ENCODE measurements at regions of chr11 and their contacts with region 1.

Region 1: DNA sequence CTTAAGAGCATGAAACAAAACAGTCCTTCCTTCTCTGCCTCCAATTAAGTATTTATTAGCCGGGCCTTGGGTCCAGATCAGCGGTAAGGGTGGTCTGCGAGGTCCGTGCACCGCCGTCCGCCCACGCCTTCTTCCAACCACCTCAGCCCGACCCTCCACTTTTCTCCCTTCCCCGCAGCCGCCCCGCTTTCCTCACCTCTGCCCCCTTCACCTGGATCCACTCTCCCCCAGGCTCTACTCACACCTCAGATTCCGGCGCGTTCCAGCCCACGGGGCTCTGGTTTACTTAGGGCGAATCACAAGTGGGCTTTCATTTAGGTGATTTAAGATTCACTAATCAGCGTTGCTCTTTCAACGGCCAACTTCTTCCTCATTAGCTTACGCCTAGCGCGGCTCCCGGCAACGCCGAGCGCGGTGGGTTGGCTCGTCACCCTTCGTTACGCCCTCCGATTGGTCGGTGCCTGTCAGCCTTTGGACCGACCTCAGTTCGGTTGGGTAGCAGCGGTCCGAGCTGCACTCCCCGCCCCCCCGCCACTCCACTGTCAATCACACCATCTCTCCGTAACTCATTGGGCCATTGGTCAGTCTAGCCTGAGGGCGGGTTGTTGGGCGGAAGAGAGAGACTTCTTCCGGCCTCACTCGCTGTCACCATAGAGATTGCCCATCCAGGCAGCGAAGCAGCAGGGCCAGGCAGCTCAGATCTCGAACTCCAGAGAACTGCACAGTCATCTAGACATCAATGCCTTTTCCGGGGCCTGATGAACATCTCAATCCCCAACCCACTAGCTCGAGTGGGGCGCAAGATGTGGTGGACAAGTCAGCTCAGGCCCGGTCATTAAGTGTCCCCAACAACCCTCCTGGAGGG is at the start of gene TMEM218:
- DNase-seq: peak; percentile 99
- ATAC-seq: peak; percentile 99
- H3K4me3 Mint-ChIP-seq: peak within 1 kb of the TSS; percentile 93
- H3K27ac Mint-ChIP-seq: peak within 1 kb of the TSS; percentile 94
- H3K4me1 Mint-ChIP-seq: peaks cover 18% of the 10 kb centered on the region
- H3K27me3 Mint-ChIP-seq: peaks cover 4% of the 10 kb centered on the region
- total RNA-seq, gene TMEM218: 14.9 to 17.4 TPM

Region 2: GRCh38 chr11:124875943-124876817 is 235.4 kb before region 1 on chr11:
- CTCF ChIA-PET with region 1: interaction called, 13 read pairs
- POLR2A ChIA-PET with region 1: no interaction called
- DNase-seq: peak; percentile 86
- ATAC-seq: peak; percentile 95
- H3K4me3 Mint-ChIP-seq: peak overlapping the region; percentile 84
- H3K27ac Mint-ChIP-seq: peak overlapping the region; percentile 93
- H3K4me1 Mint-ChIP-seq: peaks cover 24% of the 10 kb centered on the region
- H3K27me3 Mint-ChIP-seq: peaks cover 41% of the 10 kb centered on the region

Region 3: DNA sequence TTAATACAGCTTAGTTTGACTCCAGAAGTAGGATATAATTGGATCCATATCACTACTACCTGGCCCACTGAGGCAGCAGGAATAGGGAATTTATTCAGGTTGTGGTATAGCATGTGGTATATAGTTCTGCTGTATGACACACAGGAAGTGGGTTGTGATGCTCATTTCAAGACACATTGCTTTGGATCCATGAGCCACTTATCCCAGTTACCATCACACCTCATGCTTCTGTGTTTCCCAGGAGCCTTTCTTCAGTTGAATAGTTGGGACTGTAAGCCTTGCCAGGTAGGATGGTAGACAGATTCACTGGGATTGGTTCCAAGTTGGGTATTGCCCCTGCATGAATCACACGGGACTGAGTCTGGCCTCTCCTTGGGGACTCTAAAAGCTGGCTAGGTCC is 58.4 kb before region 1 on chr11:
- CTCF ChIA-PET with region 1: no interaction called
- POLR2A ChIA-PET with region 1: no interaction called
- DNase-seq: no peak
- ATAC-seq: no peak
- H3K4me3 Mint-ChIP-seq: no peak overlapping the region
- H3K27ac Mint-ChIP-seq: no peak overlapping the region
- H3K4me1 Mint-ChIP-seq: peaks cover 10% of the 10 kb centered on the region
- H3K27me3 Mint-ChIP-seq: peaks cover 3% of the 10 kb centered on the region

Region 4: DNA sequence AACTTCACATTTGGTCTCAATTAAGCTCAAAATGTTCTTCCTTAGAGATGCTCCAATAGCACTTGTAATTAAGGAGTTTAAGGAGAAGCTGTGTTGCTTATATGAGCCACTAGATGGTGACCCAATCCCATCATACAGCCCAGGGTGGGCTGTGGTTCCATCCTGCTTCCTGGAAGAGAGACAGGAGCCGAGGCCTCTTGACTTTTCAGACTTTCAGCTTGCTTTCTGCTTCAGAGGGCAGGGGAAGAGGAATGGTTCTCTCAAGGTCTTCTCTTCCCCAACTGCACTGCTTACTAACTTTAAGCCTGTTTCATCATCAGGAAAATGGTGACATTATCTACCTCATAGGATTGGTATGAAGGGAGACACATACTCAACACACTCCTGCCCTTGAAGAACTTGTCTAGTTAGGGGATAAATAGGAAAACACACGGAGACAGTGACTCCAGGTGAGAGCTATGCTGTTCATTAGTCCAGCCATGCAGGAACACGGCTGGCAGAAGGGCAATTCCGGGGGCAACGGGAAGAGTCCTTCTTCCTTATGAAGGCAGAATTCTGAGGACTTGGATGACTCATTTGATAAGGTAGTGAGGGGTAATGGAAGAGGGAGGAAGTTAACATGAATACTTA is 20.2 kb before region 1 on chr11:
- CTCF ChIA-PET with region 1: interaction called, 12 read pairs
- POLR2A ChIA-PET with region 1: interaction called, 5 read pairs
- DNase-seq: no peak
- ATAC-seq: no peak
- H3K4me3 Mint-ChIP-seq: no peak overlapping the region
- H3K27ac Mint-ChIP-seq: peak overlapping the region; percentile 20
- H3K4me1 Mint-ChIP-seq: peaks cover 8% of the 10 kb centered on the region
- H3K27me3 Mint-ChIP-seq: no peaks in the 10 kb centered on the region

Region 5: GRCh38 chr11:125123947-125124617 is 12.5 kb after region 1 on chr11:
- CTCF ChIA-PET with region 1: interaction called, 54 read pairs
- POLR2A ChIA-PET with region 1: no interaction called
- DNase-seq: peak; percentile 53
- ATAC-seq: peak; percentile 77
- H3K4me3 Mint-ChIP-seq: no peak overlapping the region
- H3K27ac Mint-ChIP-seq: no peak overlapping the region
- H3K4me1 Mint-ChIP-seq: no peaks in the 10 kb centered on the region
- H3K27me3 Mint-ChIP-seq: peaks cover 22% of the 10 kb centered on the region

Region 6: DNA sequence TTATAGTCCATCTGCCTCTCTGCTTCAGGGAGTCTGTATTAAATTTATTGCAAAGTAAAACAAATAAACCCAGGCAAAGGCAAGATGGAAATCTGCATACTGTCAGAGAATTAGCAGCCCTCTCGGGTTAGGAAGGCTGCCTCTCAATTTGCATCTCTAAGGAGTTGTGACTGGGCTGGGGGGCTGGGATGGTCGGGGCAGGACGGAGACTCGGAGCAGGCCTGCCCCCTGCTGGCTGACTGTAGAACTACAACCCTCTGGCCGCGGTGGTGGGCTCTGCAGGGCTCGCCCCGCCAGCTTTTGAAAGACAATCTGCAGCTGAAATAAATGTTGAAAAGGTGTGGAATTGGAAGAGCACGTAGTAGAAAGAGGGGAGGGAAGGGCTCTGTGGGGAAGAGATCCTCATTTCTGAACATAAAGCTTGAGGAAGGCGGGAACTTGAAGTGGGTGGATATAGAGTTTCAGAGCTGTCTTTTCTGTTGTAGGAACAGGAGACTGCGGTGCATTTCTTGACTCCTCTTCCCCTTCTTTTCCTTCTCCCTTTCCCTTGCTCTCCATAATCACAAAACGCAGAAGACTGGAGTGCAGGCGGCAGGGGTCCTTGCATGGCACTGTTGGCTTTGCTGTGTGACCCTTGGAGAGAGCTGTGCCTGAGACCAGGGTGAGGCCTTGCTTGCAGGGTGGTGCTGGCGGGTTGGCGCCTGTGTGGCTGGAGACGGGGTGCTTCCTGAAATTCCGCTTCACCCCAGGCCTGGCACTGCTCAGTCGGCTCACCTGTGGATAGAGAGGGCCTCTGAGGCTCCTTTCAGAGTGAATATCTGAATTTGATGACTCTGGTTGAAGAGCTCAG is 30.3 kb after region 1 on chr11:
- CTCF ChIA-PET with region 1: interaction called, 15 read pairs
- POLR2A ChIA-PET with region 1: no interaction called
- DNase-seq: peak; percentile 63
- ATAC-seq: peak; percentile 89
- H3K4me3 Mint-ChIP-seq: no peak overlapping the region
- H3K27ac Mint-ChIP-seq: no peak overlapping the region
- H3K4me1 Mint-ChIP-seq: no peaks in the 10 kb centered on the region
- H3K27me3 Mint-ChIP-seq: peaks cover 23% of the 10 kb centered on the region

Measured in activated CD8-positive, alpha-beta T cell treated with anti-CD3 and anti-CD28 coated beads, Interleukin-2, amount 10 ng/mL, durations not matched to agents 7 days and 5 days (primary cell).